Endothelial cell of umbilical vein (primary cell): ENCODE measurements at regions of chr3 and their contacts with region 1.

Region 1: DNA sequence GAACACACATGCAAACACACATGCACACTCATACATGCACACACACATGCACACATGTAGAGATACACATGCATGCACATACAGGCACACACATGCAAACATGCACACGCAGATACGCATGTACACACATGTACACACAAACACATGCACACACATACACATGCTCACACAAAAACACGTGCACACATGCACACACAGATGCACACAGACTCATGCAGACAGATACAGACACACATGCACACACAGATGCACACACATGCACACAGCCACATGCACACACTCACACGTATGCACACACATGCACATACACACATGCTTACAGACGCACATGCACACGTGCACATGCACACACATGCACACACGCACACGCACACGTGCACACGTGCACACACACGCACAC is 37.3 kb upstream of the ALG1L2 start:
- DNase-seq: peak; percentile 1
- H3K4me3 ChIP-seq: no peak overlapping the region
- H3K27ac ChIP-seq: no peak overlapping the region
- H3K4me1 ChIP-seq: no peaks in the 10 kb centered on the region
- H3K27me3 ChIP-seq: no peaks in the 10 kb centered on the region
- CTCF ChIP-seq: no peak
- POLR2A ChIP-seq: no peak

Region 2: GRCh38 chr3:129911261-129911861 is 133.0 kb before region 1 on chr3:
- CTCF ChIA-PET with region 1: no interaction called
- POLR2A ChIA-PET with region 1: no interaction called
- dilution Hi-C with region 1: no loop called
- intact Hi-C with region 1: no loop called
- DNase-seq: peak; percentile 90
- H3K4me3 ChIP-seq: no peak overlapping the region
- H3K27ac ChIP-seq: no peak overlapping the region
- H3K4me1 ChIP-seq: peaks cover 4% of the 10 kb centered on the region
- H3K27me3 ChIP-seq: no peaks in the 10 kb centered on the region
- CTCF ChIP-seq: no peak
- POLR2A ChIP-seq: no peak

Region 3: GRCh38 chr3:129950318-129951046 is 93.9 kb before region 1 on chr3:
- CTCF ChIA-PET with region 1: no interaction called
- POLR2A ChIA-PET with region 1: no interaction called
- dilution Hi-C with region 1: no loop called
- intact Hi-C with region 1: no loop called
- DNase-seq: no peak
- H3K4me3 ChIP-seq: no peak overlapping the region
- H3K27ac ChIP-seq: no peak overlapping the region
- H3K4me1 ChIP-seq: no peaks in the 10 kb centered on the region
- H3K27me3 ChIP-seq: peaks cover 9 to 13% of the 10 kb centered on the region in 2 experiments
- CTCF ChIP-seq: no peak
- POLR2A ChIP-seq: no peak

Region 4: GRCh38 chr3:130088061-130088460 is 43.7 kb after region 1 on chr3:
- CTCF ChIA-PET with region 1: no interaction called
- POLR2A ChIA-PET with region 1: no interaction called
- dilution Hi-C with region 1: no loop called
- intact Hi-C with region 1: loop called (anchors 1 kb)
- DNase-seq: no peak
- H3K4me3 ChIP-seq: no peak overlapping the region
- H3K27ac ChIP-seq: no peak overlapping the region
- H3K4me1 ChIP-seq: no peaks in the 10 kb centered on the region
- H3K27me3 ChIP-seq: peaks cover 0 to 5% of the 10 kb centered on the region in 2 experiments
- CTCF ChIP-seq: no peak
- POLR2A ChIP-seq: no peak

Region 5: DNA sequence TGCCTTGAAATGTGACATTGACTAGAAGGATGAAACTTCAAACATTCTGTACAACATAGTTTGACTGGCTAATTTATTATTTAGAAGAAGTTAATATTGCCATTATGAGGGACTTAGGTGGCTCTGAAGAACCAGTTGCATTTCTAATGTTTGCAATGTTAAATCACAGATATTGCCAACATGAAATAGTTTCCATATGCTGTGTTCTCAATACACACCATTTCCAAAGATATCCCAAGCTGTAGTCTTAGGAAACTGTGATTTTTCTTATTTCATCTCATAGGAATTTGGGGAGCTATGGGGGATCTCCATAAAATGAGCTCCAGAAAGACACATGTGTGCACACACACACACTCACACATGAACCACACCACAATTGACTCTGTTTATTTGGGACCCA is 73.6 kb after region 1 on chr3:
- CTCF ChIA-PET with region 1: no interaction called
- POLR2A ChIA-PET with region 1: no interaction called
- dilution Hi-C with region 1: no loop called
- intact Hi-C with region 1: no loop called
- DNase-seq: no peak
- H3K4me3 ChIP-seq: no peak overlapping the region
- H3K27ac ChIP-seq: no peak overlapping the region
- H3K4me1 ChIP-seq: no peaks in the 10 kb centered on the region
- H3K27me3 ChIP-seq: peaks cover 0 to 3% of the 10 kb centered on the region in 2 experiments
- CTCF ChIP-seq: no peak
- POLR2A ChIP-seq: no peak